ENCODE measurements at regions of chr7 and their contacts with region 1.

Region 1: DNA sequence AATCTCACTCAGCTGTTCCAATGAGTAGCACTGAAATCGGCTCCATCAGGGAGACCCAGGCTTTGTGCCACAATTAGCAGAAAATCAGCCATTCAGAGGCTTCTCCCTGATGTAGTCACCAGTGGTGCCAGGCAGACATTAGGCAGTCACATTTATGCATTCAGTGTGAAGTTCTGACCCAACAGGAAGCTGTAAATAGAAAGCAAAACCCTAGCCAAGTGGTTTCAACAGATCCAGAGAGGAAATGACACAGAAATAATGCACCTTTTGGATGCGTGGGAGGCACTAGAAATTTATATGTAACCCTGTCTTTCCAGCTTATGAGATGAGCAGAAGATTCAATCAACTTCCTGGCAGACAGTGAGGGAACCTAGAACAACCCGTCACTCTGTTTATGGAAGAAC is 186.4 kb downstream of the PDE1C start:
- DNase-seq: no peak

Region 2: GRCh38 chr7:31695859-31696614 is 187.7 kb before region 1 on chr7:
- intact Hi-C with region 1: no loop called
- DNase-seq: no peak

Region 3: GRCh38 chr7:32062150-32062549 is 178.4 kb after region 1 on chr7:
- intact Hi-C with region 1: loop called in 1 of 2 experiments (anchors 10 kb)
- DNase-seq: no peak